H1 (cell line): ENCODE measurements at regions of chr9 and their contacts with region 1.

Region 1: GRCh38 chr9:122125158-122125508 is 32.0 kb upstream of the TTLL11 start:
- DNase-seq: peak in 1 of 2 experiments; percentile 92
- H3K4me3 ChIP-seq: 0 out of 8 replicates have a peak overlapping the region, but pooled peaks of 1 of the 4 experiments have one; percentile 67
- H3K27ac ChIP-seq: no peak overlapping the region
- H3K4me1 ChIP-seq: peaks cover 0 to 10% (median 3%) of the 10 kb centered on the region in 4 experiments; a peak in 6 of 7 replicates
- H3K27me3 ChIP-seq: peaks cover 9 to 26% (median 24%) of the 10 kb centered on the region in 4 experiments
- CTCF ChIP-seq: peak in 2 of 3 experiments; percentile 95 to 96; a peak in 3 of 4 replicates
- EP300 ChIP-seq: no peak
- POLR2A ChIP-seq: no peak
- RAD21 ChIP-seq: peak; percentile 99

Region 2: DNA sequence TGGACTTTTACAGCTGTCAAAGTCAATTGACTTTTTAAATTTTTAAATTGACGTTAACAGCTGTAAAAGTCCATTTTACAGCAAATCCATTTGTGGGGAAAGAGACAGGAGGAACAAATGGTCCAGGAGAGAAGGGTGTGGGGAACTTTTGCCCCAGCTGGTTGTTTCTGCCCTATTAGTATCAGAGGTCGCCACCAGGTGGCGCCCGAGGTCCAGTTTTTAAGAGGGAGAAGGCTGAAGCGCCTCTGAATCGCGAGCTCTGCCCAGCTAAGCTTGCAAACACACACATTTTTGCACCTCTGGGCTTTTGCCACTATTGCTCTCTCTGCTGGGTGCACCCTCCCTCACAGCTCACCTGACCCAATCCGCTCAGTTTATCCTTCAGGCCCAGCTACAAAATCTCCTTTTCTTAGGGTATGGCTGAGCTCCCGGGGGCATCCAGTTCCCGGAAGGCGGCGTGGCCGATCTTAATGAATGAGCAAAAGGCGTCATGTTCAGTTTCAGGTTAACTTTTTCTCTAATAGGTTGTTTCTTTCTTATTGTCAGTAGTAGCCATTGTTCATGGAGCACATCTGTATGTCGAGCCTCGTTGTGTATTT is 25.8 kb before region 1 on chr9:
- CTCF ChIA-PET with region 1: interaction called, 405 read pairs
- POLR2A ChIA-PET with region 1: interaction called, 9 read pairs
- DNase-seq: peak; percentile 47 to 92
- H3K4me3 ChIP-seq: no peak overlapping the region
- H3K27ac ChIP-seq: no peak overlapping the region
- H3K4me1 ChIP-seq: no peaks in the 10 kb centered on the region
- H3K27me3 ChIP-seq: peaks cover 0 to 2% (median under 1%) of the 10 kb centered on the region in 4 experiments; a peak in 3 of 7 replicates
- CTCF ChIP-seq: peak; percentile 65 to 95 (median 74)
- EP300 ChIP-seq: no peak
- POLR2A ChIP-seq: no peak
- RAD21 ChIP-seq: peak; percentile 89 to 92

Region 3: GRCh38 chr9:122159026-122159924 is 34.1 kb after region 1 on chr9 and contains the starts of genes MORN5 and NDUFA8:
- CTCF ChIA-PET with region 1: interaction called, 54 read pairs
- POLR2A ChIA-PET with region 1: no interaction called
- DNase-seq: peak; percentile 93 to 99
- H3K4me3 ChIP-seq: peak within 1 kb of the TSS; percentile 88 to 93 (median 90)
- H3K27ac ChIP-seq: peak within 1 kb of the TSS; percentile 37
- H3K4me1 ChIP-seq: peaks cover 0 to 4% (median 0%) of the 10 kb centered on the region in 4 experiments; a peak in 2 of 7 replicates
- H3K27me3 ChIP-seq: no peaks in the 10 kb centered on the region; a peak in 1 of 7 replicates
- CTCF ChIP-seq: peak in 1 of 3 experiments; percentile 11; a peak in 1 of 4 replicates
- EP300 ChIP-seq: no peak
- POLR2A ChIP-seq: peak; percentile 46 to 56
- RAD21 ChIP-seq: no peak
- total RNA-seq, gene MORN5: not detected in 2 replicates
- total RNA-seq, gene NDUFA8: 59.8 and 61.0 TPM in 2 replicates

Region 4: DNA sequence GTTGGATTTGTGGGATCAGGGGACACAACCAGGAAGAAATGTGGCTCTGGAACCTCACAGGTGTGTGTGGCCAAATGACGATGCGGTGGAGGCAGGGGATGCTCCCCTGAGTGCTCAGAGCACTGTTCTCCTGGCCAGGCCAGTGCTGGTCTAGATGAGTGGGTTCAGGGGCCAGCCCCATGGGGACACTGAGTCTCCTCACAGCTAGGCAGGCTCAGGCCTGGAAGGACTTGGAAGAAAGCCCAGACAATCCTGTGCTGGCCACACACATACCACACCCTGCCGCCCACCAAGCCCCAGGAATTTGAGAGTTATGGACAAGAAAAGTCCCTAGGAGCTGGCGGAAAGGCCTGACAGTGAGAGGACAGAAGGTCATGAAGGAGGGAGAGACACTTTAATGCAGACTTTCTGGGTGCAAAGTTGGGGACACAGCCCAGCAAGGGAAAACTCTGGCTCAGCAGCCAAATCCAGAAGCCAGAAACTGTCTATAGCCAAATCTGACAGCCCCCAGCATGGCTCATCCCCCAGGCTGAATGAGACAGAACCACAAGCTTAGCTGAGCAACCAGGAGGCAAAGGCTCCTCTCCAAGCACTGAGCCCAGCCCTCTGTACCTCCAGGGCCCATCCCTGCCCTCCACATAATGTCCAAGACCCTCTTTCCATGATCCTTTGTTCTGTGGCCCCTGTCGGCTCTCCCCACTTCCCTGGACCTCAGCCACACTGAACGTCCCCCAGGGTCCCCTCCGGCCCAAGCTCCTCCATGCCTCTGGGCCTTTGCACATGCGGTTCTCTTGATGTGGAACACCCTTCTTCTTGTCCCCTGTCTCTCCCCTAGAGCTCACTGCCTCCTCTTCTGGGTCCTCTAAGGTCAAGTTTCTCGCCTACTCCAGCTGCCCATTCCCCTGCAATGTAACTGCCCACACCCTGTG is 81.2 kb after region 1 on chr9:
- CTCF ChIA-PET with region 1: interaction called, 43 read pairs
- POLR2A ChIA-PET with region 1: no interaction called
- DNase-seq: no peak
- H3K4me3 ChIP-seq: no peak overlapping the region
- H3K27ac ChIP-seq: no peak overlapping the region
- H3K4me1 ChIP-seq: peaks cover 0 to 11% (median 6%) of the 10 kb centered on the region in 4 experiments; a peak in 6 of 7 replicates
- H3K27me3 ChIP-seq: peaks cover 0 to 2% (median 2%) of the 10 kb centered on the region in 4 experiments; a peak in 3 of 7 replicates
- CTCF ChIP-seq: no peak
- EP300 ChIP-seq: no peak
- POLR2A ChIP-seq: no peak
- RAD21 ChIP-seq: no peak

Region 5: GRCh38 chr9:122228568-122229484 is 103.7 kb after region 1 on chr9 and contains the start of gene LHX6:
- CTCF ChIA-PET with region 1: interaction called, 26 read pairs
- POLR2A ChIA-PET with region 1: interaction called, 6 read pairs
- DNase-seq: peak in 1 of 2 experiments; percentile 70
- H3K4me3 ChIP-seq: peak within 1 kb of the TSS; percentile 29 to 63 (median 41)
- H3K27ac ChIP-seq: no peak within 1 kb of the TSS
- H3K4me1 ChIP-seq: peaks cover 0 to 28% (median 16%) of the 10 kb centered on the region in 4 experiments; a peak in 6 of 7 replicates
- H3K27me3 ChIP-seq: peaks cover 63 to 85% (median 77%) of the 10 kb centered on the region in 4 experiments
- CTCF ChIP-seq: no peak
- EP300 ChIP-seq: no peak
- POLR2A ChIP-seq: no peak
- RAD21 ChIP-seq: no peak
- total RNA-seq, gene LHX6: 1.2 and 1.9 TPM in 2 replicates

Region 6: DNA sequence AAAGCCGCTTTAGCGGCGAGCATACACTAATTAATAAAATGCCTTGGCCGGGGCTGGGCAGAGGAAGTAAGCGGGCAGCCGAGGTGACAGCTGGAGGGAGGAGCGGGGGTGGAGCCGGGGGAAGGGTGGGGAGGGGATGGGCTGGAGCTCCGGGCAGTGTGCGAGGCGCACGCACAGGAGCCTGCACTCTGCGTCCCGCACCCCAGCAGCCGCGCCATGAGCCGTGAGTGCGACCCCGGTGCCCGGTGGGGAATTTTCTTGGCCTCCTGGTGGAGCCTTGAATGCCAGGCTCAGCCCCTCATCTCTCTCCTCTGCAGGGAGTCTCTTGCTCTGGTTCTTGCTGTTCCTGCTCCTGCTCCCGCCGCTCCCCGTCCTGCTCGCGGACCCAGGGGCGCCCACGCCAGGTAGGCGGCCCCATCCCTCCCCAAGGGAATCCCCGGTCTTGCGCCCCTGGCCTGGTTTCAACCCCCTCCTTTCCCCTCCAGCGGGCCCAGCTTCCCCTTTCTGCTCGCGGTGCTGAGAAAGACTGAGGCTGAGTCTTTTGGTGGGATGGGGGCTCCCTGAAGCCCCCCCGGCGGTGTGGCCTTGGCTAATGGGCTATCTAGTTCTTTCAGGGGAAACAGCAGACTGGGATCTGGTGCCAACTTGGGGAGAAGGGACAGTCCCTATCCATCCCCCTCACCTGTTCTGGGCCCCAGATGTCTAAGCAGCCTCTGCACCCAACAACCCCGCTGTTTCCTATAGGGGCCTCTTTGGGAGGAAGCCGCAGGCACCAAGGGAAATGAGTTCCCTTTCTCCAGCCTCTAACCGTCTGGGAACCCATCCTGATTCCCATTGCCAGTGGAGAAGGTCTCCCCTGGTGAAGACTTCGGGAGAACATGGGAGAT is 246.0 kb after region 1 on chr9 and contains the start of gene PTGS1:
- CTCF ChIA-PET with region 1: interaction called, 10 read pairs
- POLR2A ChIA-PET with region 1: interaction called, 3 read pairs
- DNase-seq: peak in 1 of 2 experiments; percentile 65
- H3K4me3 ChIP-seq: peak within 1 kb of the TSS; percentile 55 to 71 (median 59)
- H3K27ac ChIP-seq: no peak within 1 kb of the TSS
- H3K4me1 ChIP-seq: peaks cover 13 to 20% (median 16%) of the 10 kb centered on the region in 4 experiments
- H3K27me3 ChIP-seq: peaks cover 5 to 45% (median 36%) of the 10 kb centered on the region in 4 experiments
- CTCF ChIP-seq: no peak
- EP300 ChIP-seq: no peak
- POLR2A ChIP-seq: no peak
- RAD21 ChIP-seq: no peak
- total RNA-seq, gene PTGS1: 1.1 and 1.3 TPM in 2 replicates